Natural killer cell (primary cell): ENCODE measurements at regions of chr16 and their contacts with region 1.

Region 1: DNA sequence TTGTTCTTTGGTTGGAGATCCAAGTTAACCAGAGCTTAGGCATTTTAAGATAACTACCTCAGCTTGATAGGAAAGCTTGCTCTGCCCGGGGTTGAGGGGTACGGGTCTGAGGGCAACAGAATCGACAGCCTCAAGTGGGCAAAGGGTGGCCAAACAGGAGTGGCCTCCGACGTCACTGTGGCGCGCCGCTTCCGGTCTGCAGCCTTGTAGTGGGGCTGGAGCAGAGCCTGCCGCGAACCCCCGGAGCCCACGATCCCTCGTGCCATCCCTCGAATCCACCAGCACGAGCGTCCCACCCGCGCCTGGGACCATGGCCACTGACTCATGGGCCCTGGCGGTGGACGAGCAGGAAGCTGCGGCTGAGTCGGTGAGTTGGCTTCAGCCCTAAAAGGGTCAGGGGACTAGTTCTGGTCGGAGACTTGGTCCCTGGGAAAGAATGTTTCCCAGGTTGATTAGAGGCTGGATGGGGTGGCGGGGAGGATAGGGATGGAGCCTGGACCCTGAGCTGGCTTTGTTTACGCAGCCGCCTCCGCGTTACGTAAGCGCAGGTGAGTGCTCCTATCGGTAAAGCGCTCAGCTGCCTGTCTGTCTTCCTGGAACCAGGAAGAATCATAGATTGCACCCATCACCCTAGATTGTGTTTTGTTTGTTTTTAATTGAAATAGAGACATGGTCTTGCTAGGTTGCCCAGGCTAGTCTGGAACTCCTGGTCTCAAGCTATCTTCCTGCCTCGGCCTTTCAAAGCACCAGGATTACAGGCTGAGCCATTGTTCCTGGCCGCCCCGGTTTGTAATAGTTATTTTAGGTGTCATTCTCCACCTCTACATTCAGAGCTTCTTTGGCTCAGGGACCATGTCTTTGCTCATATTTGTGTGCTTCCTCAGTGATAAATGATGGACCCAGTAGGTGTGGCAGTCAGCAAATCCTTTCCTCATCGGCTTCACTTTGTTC is at the start of gene DDX19B:
- DNase-seq: peak; percentile 61 to 75
- ATAC-seq: peak; percentile 79 to 84 (median 84)
- H3K4me3 ChIP-seq: peak within 1 kb of the TSS; percentile 82
- H3K4me3 Mint-ChIP-seq: peak within 1 kb of the TSS; percentile 90
- H3K27ac ChIP-seq: peak within 1 kb of the TSS; percentile 92
- H3K27ac Mint-ChIP-seq: peak within 1 kb of the TSS; percentile 93 to 97
- H3K4me1 ChIP-seq: peaks cover 16% of the 10 kb centered on the region
- H3K4me1 Mint-ChIP-seq: peaks cover 38 to 42% of the 10 kb centered on the region in 2 donors
- H3K27me3 ChIP-seq: no peaks in the 10 kb centered on the region
- H3K27me3 Mint-ChIP-seq: no peaks in the 10 kb centered on the region
- CTCF ChIP-seq: no peak
- total RNA-seq, gene DDX19B: 39.9 to 52.6 (median 48.8) TPM

Region 2: DNA sequence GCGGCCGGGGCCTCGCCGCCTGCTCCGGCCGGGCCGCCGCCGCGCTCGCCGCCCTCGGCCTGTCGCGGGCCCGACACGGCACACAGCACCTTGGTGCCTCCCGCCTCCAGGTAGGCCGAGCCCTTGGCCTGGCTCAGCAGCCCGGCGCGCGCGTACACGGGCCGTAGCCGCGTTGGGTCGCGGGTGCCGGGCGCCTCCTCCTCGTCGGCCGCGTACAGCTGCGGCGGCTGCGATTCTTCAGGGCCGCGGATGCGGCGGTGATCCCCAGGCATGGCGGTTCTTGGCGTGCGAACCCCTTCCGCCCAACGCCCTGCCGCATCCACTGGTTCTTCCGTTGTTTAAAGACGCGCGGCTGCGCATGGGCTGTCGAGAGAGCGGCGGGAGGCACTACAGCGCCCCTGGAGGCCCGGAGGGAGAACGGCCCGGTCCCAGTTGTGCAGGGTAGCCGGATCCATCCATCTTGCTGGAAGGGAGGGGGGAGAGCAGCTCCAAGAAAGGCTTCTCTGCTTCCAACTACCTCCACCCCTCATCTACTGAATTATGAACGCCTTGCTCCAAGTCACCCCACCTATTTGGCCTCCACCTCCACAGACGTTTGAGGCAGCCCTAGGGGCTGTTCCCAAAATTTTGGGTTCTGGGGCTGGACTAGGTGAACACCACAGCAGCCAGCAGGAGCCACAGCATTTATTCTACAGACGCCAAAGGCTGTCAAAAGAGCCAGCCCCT is 47.5 kb before region 1 on chr16 and contains the start of gene EXOSC6:
- intact Hi-C with region 1: loop called (anchors 5 kb)
- DNase-seq: peak; percentile 89 to 97
- ATAC-seq: peak; percentile 91 to 98 (median 95)
- H3K4me3 ChIP-seq: peak within 1 kb of the TSS; percentile 19
- H3K4me3 Mint-ChIP-seq: peak within 1 kb of the TSS; percentile 91
- H3K27ac ChIP-seq: peak within 1 kb of the TSS; percentile 39
- H3K27ac Mint-ChIP-seq: peak within 1 kb of the TSS; percentile 83 to 93
- H3K4me1 ChIP-seq: peaks cover 24% of the 10 kb centered on the region
- H3K4me1 Mint-ChIP-seq: peaks cover 0 to 12% of the 10 kb centered on the region in 2 donors
- H3K27me3 ChIP-seq: no peaks in the 10 kb centered on the region
- H3K27me3 Mint-ChIP-seq: no peaks in the 10 kb centered on the region
- CTCF ChIP-seq: peak; percentile 88
- total RNA-seq, gene EXOSC6: 26.4 to 27.6 (median 27.3) TPM

Region 3: DNA sequence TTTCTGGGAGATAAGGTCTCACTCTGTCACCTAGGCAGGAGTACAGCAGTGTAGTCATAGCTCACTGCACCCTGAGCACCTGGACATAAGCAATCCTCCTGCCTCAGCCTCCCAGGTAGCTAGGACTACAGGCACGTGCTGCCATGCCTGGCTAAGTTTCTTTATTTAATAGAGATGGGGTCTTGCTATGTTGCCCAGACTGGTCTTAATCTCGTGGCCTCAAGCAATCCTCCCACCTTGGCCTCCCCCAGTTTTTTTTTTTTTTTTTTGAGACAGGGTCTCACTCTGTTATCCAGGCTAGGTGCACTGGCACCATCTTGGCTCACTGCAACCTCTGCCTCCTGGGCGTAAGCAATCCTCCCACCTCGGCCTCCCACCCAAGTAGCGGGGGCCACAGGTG is 20.9 kb after region 1 on chr16:
- intact Hi-C with region 1: no loop called
- DNase-seq: no peak
- ATAC-seq: no peak
- H3K4me3 ChIP-seq: no peak overlapping the region
- H3K4me3 Mint-ChIP-seq: no peak overlapping the region
- H3K27ac ChIP-seq: no peak overlapping the region
- H3K27ac Mint-ChIP-seq: no peak overlapping the region
- H3K4me1 ChIP-seq: no peaks in the 10 kb centered on the region
- H3K4me1 Mint-ChIP-seq: no peaks in the 10 kb centered on the region
- H3K27me3 ChIP-seq: no peaks in the 10 kb centered on the region
- H3K27me3 Mint-ChIP-seq: no peaks in the 10 kb centered on the region
- CTCF ChIP-seq: no peak